Caco-2 (cell line): ENCODE measurements at regions of chr11 and their contacts with region 1.

Region 1: DNA sequence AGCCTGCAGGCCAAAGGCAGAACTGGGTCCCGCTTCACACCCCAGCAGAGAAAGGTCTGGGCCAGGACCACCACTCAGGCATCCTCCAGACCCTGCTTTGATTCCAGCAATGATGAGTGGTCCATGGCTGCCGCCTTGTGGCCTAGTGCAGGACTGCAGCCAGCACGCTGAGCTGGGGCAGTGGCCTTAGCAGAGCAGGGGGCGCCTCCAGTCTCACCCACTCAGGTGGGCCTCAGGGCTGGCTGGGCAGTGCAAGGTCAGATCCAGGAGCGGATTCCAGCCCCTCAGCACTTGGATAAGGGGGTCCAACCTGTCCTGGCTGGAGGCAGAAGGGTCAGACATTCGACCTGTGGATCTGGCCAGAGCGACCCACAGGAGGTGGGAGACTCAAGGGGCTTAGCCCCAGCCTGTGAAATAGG is 9.6 kb upstream of the PDE2A start:
- DNase-seq: peak; percentile 76 to 89
- H3K4me3 ChIP-seq: no peak overlapping the region
- H3K4me3 Mint-ChIP-seq: no peak overlapping the region
- H3K27ac Mint-ChIP-seq: no peak overlapping the region
- H3K4me1 ChIP-seq: no peaks in the 10 kb centered on the region
- H3K4me1 Mint-ChIP-seq: peaks cover 6% of the 10 kb centered on the region
- H3K27me3 ChIP-seq: no peaks in the 10 kb centered on the region
- H3K27me3 Mint-ChIP-seq: peaks cover 9% of the 10 kb centered on the region
- CTCF ChIP-seq: peak; percentile 99

Region 2: GRCh38 chr11:72561856-72562255 is 121.9 kb before region 1 on chr11:
- CTCF ChIA-PET with region 1: no interaction called
- POLR2A ChIA-PET with region 1: no interaction called
- intact Hi-C with region 1: no loop called
- DNase-seq: no peak
- H3K4me3 ChIP-seq: no peak overlapping the region
- H3K4me3 Mint-ChIP-seq: no peak overlapping the region
- H3K27ac Mint-ChIP-seq: no peak overlapping the region
- H3K4me1 ChIP-seq: peaks cover 13% of the 10 kb centered on the region
- H3K4me1 Mint-ChIP-seq: peaks cover 6% of the 10 kb centered on the region
- H3K27me3 ChIP-seq: no peaks in the 10 kb centered on the region
- H3K27me3 Mint-ChIP-seq: no peaks in the 10 kb centered on the region
- CTCF ChIP-seq: no peak

Region 3: DNA sequence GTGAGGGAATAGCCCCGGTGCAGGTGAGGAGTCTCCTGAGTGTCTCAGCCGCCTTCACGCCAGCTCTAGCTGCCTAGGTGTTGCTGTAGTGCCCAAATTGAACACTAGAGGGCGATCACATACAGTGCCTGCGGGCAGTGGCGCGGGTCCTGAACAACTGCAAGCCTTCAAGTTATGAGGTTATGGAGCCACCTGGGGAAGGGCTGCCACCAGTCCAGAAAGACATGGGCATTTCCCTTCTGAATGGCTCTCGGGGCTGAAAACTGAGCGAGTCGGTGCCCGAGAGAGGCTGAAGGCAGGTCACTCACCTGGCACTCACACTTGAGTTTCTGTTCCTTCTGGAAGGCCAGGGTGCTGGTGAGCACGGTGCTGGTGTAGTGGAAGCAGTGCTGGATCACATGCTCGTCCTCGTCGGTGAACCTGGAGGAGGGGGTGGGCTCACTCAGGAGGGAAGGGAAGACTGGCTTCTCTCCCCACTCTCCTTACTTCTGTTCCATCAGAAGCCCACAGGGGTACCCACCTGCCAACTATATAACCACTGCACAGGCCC is 98.0 kb before region 1 on chr11:
- CTCF ChIA-PET with region 1: interaction called, 28 read pairs
- POLR2A ChIA-PET with region 1: no interaction called
- intact Hi-C with region 1: loop called (anchors 1 kb)
- DNase-seq: peak; percentile 75 to 86
- H3K4me3 ChIP-seq: no peak overlapping the region
- H3K4me3 Mint-ChIP-seq: no peak overlapping the region
- H3K27ac Mint-ChIP-seq: no peak overlapping the region
- H3K4me1 ChIP-seq: no peaks in the 10 kb centered on the region
- H3K4me1 Mint-ChIP-seq: no peaks in the 10 kb centered on the region
- H3K27me3 ChIP-seq: peaks cover under 1% of the 10 kb centered on the region; the same call in 1 of the 2 replicates
- H3K27me3 Mint-ChIP-seq: peaks cover 7% of the 10 kb centered on the region
- CTCF ChIP-seq: peak; percentile 97 to 98

Region 4: DNA sequence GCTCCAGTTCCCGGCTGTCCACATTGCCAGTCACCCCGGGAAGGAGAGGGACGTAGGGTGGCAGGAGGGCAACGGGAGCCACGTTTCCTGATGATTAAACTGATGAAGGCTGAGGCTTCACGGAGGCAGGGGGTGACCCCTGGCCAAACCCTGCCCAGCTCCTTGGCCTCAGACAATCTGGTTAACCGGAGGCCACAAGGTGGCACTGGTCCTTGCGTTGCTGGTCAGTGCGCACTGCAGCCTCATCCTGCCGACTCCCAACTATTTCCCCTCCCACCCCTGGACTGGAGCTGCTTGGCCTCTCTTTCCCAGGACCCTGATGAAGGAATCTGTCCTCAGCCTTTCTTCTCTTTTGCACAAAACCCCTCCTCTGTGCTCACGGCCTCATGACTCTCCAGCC is 84.9 kb before region 1 on chr11:
- CTCF ChIA-PET with region 1: interaction called, 32 read pairs
- POLR2A ChIA-PET with region 1: no interaction called
- intact Hi-C with region 1: no loop called
- DNase-seq: peak; percentile 72 to 76
- H3K4me3 ChIP-seq: no peak overlapping the region
- H3K4me3 Mint-ChIP-seq: no peak overlapping the region
- H3K27ac Mint-ChIP-seq: no peak overlapping the region
- H3K4me1 ChIP-seq: no peaks in the 10 kb centered on the region
- H3K4me1 Mint-ChIP-seq: no peaks in the 10 kb centered on the region
- H3K27me3 ChIP-seq: peaks cover 4% of the 10 kb centered on the region
- H3K27me3 Mint-ChIP-seq: peaks cover 25% of the 10 kb centered on the region
- CTCF ChIP-seq: peak; percentile 71 to 82

Region 5: GRCh38 chr11:72696866-72697700 is 13.3 kb after region 1 on chr11:
- CTCF ChIA-PET with region 1: interaction called, 14 read pairs
- POLR2A ChIA-PET with region 1: no interaction called
- intact Hi-C with region 1: no loop called
- DNase-seq: no peak
- H3K4me3 ChIP-seq: no peak overlapping the region
- H3K4me3 Mint-ChIP-seq: no peak overlapping the region
- H3K27ac Mint-ChIP-seq: no peak overlapping the region
- H3K4me1 ChIP-seq: no peaks in the 10 kb centered on the region
- H3K4me1 Mint-ChIP-seq: no peaks in the 10 kb centered on the region
- H3K27me3 ChIP-seq: no peaks in the 10 kb centered on the region
- H3K27me3 Mint-ChIP-seq: no peaks in the 10 kb centered on the region
- CTCF ChIP-seq: no peak

Region 6: GRCh38 chr11:72807021-72807693 is 123.4 kb after region 1 on chr11:
- CTCF ChIA-PET with region 1: no interaction called
- POLR2A ChIA-PET with region 1: no interaction called
- intact Hi-C with region 1: no loop called
- DNase-seq: no peak
- H3K4me3 ChIP-seq: no peak overlapping the region
- H3K4me3 Mint-ChIP-seq: no peak overlapping the region
- H3K27ac Mint-ChIP-seq: no peak overlapping the region
- H3K4me1 ChIP-seq: 0 out of 2 replicates have a peak, but pooled peaks cover 3% of the 10 kb centered on the region
- H3K4me1 Mint-ChIP-seq: peaks cover 11% of the 10 kb centered on the region
- H3K27me3 ChIP-seq: no peaks in the 10 kb centered on the region
- H3K27me3 Mint-ChIP-seq: no peaks in the 10 kb centered on the region
- CTCF ChIP-seq: no peak